ENCODE measurements at regions of chr14 and their contacts with region 1.

Region 1: GRCh38 chr14:63852817-63853731 is at the start of gene SYNE2:
- DNase-seq: peak; percentile 89
- ATAC-seq: peak; percentile 86
- H3K4me3 Mint-ChIP-seq: peak within 1 kb of the TSS; percentile 95
- H3K27ac Mint-ChIP-seq: peak within 1 kb of the TSS; percentile 85
- H3K4me1 Mint-ChIP-seq: peaks cover 35% of the 10 kb centered on the region
- H3K27me3 Mint-ChIP-seq: no peaks in the 10 kb centered on the region
- total RNA-seq, gene SYNE2: 18.4 to 21.8 TPM

Region 2: DNA sequence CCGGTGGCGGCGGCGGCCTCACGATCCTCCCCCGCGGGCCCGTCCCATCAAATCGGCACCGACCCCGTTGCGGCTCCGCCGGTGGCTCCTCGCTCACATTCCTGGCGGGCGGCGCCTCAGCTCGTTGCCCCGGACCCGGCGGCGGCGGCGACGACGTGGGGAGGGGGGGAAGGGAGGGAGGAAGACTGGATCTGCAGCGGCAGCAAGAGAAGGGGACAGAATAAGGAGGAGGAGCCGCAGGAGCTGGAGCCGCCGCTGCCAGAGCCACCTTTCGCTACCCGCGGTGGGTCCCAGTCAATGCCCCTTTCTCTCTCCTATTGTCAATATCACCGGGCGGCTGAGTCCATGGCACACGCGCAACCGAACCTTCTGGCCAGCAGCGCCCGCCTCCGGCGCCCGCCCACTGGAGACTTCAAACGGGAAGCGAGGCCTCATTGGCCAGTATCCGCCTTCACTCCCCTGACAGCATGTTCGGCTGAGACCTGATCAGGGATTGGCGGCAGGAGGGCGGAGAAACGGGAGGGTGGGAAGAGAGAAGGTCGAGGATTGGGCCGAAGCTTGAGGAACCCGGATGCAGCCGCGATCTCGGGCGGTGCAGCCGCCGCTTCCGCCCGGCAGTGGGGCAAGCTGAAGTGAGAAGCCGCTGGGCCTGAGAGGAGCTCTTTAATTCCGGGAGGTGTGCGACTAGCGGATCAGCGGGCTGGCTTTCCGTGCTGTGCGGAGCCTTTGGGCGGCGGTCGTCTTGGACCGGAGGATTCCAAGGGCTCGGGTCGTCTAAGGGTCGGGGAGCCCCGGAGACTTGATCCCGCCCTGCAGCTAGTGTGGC is 309.9 kb before region 1 on chr14 and contains the start of gene PPP2R5E:
- CTCF ChIA-PET with region 1: no interaction called
- POLR2A ChIA-PET with region 1: no interaction called
- intact Hi-C with region 1: loop called in 1 of 2 experiments (anchors 2 kb)
- DNase-seq: peak; percentile 98
- ATAC-seq: peak; percentile 99
- H3K4me3 Mint-ChIP-seq: peak within 1 kb of the TSS; percentile 86
- H3K27ac Mint-ChIP-seq: peak within 1 kb of the TSS; percentile 85
- H3K4me1 Mint-ChIP-seq: peaks cover 26% of the 10 kb centered on the region
- H3K27me3 Mint-ChIP-seq: no peaks in the 10 kb centered on the region
- total RNA-seq, gene PPP2R5E: 38.4 to 40.4 TPM

Region 3: DNA sequence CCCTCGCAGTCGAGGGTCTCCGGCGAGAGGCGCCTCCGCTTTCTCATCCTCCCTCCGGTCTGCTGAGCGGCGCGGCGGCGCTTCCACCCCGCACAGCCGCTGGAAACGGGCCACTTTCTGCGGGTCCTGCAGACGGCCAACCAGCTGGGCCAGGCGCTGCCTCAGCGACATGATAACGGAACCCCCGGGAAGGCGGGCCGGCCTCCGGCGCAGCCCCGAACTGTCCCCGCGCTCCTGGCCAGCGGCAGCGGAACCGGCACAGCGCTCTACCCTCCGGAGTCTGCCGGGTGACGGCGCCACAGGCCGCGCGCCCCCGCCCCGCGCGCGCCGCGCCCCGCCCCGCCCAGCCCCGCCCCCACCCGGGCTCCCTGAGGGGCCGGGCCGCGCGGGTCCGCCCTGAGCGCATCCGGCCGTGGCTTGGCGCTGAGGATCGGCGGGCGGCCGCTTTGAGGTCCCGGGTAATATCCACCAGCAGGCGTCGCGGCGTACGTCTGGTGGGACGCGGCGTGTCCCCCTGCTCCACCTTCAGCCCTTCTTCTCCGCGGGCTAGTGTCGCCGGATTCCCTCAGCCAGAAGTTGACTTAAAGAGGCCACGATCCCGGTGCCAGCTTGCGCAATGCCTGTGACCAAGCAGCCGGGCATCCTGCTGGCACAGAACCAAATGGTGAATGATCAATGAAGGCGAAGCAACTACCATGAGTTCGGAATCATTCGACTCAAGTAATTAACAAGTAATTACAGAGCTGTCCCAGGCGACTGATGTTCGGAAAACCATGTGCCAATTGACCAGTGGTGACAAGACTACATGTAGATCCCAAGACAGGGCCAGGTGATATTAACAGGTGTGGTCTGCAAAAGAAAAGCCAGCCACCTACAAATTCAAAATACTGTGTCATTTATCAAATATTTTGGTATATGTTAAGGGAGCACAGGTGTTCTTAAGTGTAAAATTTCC is 125.0 kb before region 1 on chr14 and contains the start of gene SGPP1:
- CTCF ChIA-PET with region 1: no interaction called
- POLR2A ChIA-PET with region 1: interaction called, 3 read pairs
- intact Hi-C with region 1: loop called (anchors 2 to 5 kb)
- DNase-seq: peak; percentile 87
- ATAC-seq: peak; percentile 91
- H3K4me3 Mint-ChIP-seq: peak within 1 kb of the TSS; percentile 99
- H3K27ac Mint-ChIP-seq: peak within 1 kb of the TSS; percentile 96
- H3K4me1 Mint-ChIP-seq: peaks cover 30% of the 10 kb centered on the region
- H3K27me3 Mint-ChIP-seq: no peaks in the 10 kb centered on the region
- total RNA-seq, gene SGPP1: 8.6 to 10.4 TPM

Region 4: GRCh38 chr14:63910583-63911363 is 57.7 kb after region 1 on chr14:
- CTCF ChIA-PET with region 1: interaction called, 3 read pairs
- POLR2A ChIA-PET with region 1: no interaction called
- intact Hi-C with region 1: loop called in 1 of 2 experiments (anchors 5 kb)
- DNase-seq: peak; percentile 24
- ATAC-seq: peak; percentile 94
- H3K4me3 Mint-ChIP-seq: no peak overlapping the region
- H3K27ac Mint-ChIP-seq: peak overlapping the region; percentile 44
- H3K4me1 Mint-ChIP-seq: peaks cover 47% of the 10 kb centered on the region
- H3K27me3 Mint-ChIP-seq: no peaks in the 10 kb centered on the region

Region 5: DNA sequence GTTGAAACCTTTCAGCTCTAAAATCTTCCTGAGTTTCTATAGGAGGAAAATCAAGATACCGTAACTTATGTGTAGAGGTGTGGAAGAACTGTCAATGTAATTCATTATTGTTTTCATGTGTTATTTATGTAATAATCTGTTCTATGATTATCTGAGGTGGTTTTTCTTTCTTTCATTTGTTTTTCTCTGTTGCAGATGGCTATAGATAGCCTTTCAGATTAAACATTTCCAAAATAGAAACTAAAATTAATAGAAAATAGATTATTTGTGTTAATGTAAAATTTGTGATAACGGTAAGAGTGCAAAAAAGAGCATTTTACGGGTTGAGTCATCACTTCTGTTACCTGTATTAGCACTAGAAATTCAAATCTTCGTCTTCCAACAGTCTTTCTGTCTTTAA is 128.5 kb after region 1 on chr14:
- CTCF ChIA-PET with region 1: no interaction called
- POLR2A ChIA-PET with region 1: no interaction called
- intact Hi-C with region 1: loop called in 1 of 2 experiments (anchors 5 kb)
- DNase-seq: no peak
- ATAC-seq: no peak
- H3K4me3 Mint-ChIP-seq: no peak overlapping the region
- H3K27ac Mint-ChIP-seq: no peak overlapping the region
- H3K4me1 Mint-ChIP-seq: peaks cover 6% of the 10 kb centered on the region
- H3K27me3 Mint-ChIP-seq: no peaks in the 10 kb centered on the region

Region 6: GRCh38 chr14:64005822-64006221 is 152.7 kb after region 1 on chr14:
- CTCF ChIA-PET with region 1: no interaction called
- POLR2A ChIA-PET with region 1: no interaction called
- intact Hi-C with region 1: no loop called
- DNase-seq: no peak
- ATAC-seq: no peak
- H3K4me3 Mint-ChIP-seq: no peak overlapping the region
- H3K27ac Mint-ChIP-seq: no peak overlapping the region
- H3K4me1 Mint-ChIP-seq: no peaks in the 10 kb centered on the region
- H3K27me3 Mint-ChIP-seq: no peaks in the 10 kb centered on the region

Region 7: DNA sequence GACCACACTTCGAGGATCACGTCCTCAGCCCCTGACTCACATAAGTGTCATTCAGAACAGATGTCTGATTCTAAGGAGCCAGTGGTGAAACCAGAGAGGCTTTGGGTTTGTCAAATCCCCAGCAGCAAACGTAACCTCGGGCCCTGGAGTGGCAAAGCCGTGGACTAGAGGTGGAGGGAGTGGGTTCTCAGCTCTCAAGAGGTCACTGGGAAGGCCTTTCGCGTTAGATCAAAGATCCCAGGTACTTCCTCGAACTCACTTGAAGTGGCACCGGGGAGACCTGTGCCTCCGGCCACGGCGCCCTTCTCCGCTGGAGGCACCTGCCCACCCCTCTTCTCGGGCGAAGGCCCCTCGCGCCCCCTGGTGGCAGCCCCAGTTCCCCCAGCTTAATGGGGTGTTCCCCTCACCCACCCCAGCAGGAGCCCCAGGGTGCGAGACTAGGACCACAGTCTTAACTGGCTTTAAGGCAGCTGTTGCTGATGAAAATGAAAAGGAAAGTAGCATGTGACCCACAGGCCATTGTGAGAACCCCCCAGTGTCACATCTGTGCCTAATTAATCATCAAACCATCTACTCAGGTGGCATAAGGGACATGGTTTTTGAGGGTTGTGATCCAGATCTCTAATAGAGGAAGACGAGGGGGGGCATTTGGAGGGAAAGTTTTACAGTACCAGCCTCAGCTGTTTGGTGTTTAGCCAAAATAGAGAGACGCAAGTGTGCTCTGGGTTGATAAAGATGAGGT is 441.8 kb after region 1 on chr14:
- CTCF ChIA-PET with region 1: interaction called, 3 read pairs
- POLR2A ChIA-PET with region 1: no interaction called
- intact Hi-C with region 1: loop called in 1 of 2 experiments (anchors 5 kb)
- DNase-seq: peak; percentile 94
- ATAC-seq: peak; percentile 81
- H3K4me3 Mint-ChIP-seq: peak overlapping the region; percentile 64
- H3K27ac Mint-ChIP-seq: no peak overlapping the region
- H3K4me1 Mint-ChIP-seq: peaks cover 20% of the 10 kb centered on the region
- H3K27me3 Mint-ChIP-seq: peaks cover 25% of the 10 kb centered on the region

Region 8: DNA sequence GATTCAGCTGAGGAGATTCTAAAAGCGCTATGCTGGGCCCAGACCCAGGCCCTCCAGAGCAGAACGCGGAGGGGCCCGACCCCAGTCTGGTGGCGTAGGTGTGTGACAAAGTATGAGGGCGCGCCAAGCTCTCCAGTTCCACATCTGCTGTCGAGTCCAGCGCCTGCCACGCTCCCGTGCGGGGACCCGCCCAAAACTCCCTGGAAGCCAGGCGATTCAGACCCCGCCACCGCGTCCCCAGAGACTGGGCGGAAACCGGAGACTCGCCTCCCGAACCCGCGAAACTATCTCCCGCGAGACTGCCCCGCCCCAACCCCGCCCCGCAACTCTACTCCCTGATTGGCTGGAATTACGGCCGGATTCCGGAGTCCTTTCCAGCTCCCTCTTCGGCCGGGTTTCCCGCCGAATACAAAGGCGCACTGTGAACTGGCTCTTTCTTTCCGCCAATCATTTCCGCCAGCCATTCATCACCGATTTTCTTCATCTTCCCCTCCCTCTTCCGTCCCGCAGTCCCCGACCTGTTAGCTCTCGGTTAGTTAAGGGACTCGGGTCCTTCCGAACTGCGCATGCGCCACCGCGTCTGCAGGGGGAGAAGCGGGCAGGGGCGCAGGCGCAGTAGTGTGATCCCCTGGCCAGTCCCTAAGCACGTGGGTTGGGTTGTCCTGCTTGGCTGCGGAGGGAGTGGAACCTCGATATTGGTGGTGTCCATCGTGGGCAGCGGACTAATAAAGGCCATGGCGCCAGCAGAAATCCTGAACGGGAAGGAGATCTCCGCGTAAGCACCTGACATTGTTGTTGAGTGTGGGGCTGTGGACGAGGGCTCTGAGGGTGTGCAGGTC is 534.8 kb after region 1 on chr14 and contains the start of gene MTHFD1:
- CTCF ChIA-PET with region 1: no interaction called
- POLR2A ChIA-PET with region 1: no interaction called
- intact Hi-C with region 1: loop called in 1 of 2 experiments (anchors 2 kb)
- DNase-seq: peak; percentile 99
- ATAC-seq: peak; percentile 95
- H3K4me3 Mint-ChIP-seq: peak within 1 kb of the TSS; percentile 93
- H3K27ac Mint-ChIP-seq: peak within 1 kb of the TSS; percentile 93
- H3K4me1 Mint-ChIP-seq: peaks cover 34% of the 10 kb centered on the region
- H3K27me3 Mint-ChIP-seq: no peaks in the 10 kb centered on the region
- total RNA-seq, gene MTHFD1: 213 to 222 TPM